ENCODE measurements at regions of chr20 and their contacts with region 1.

Region 1: DNA sequence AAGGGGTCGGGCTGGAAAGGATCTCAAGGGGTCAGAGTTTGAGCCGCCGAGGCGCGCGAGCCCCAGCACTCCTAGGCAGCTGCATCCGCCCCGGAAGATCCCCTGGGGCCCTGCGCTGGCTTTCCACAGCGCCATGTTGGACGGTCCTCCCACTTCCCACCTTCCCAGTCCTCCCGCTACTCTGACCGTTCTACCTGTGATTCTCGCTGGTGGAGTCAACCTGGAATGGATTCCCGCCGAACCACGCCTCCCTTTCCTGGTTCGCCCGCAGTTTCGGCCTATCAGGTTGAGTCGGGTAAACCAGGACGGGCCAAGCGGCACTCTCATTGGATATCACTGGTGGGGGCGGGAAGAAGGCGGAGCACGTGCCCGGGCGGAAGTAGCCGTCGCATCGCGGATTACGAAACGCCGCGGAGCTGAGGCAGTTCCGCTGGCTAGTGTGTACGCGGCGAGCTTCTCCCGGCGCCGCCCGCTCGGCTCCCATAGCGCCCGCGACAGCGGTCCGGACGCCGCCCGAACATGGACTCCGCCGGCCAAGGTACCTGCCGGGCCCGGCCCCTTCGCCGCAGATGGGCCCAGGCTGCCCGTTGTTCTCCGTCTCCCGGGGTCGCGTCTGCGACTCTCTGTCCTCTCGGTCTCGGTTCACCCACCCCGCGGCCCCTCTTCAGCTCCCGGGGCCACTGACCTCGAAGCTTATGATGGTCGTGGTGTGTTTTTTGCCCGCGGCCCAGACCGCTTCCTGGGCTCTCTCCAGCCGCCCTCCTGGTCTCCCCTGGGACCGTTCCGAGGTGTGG is at the start of gene TPD52L2:
- DNase-seq: peak; percentile 96 to 99 (median 97)
- H3K4me3 ChIP-seq: peak within 1 kb of the TSS; percentile 81 to 90
- H3K4me3 Mint-ChIP-seq: peak within 1 kb of the TSS; percentile 90 to 99 (median 96)
- H3K27ac ChIP-seq: peak within 1 kb of the TSS; percentile 81
- H3K27ac Mint-ChIP-seq: peak within 1 kb of the TSS; percentile 87 to 99 (median 96)
- H3K4me1 ChIP-seq: peaks cover 29% of the 10 kb centered on the region
- H3K4me1 Mint-ChIP-seq: peaks cover 15 to 48% (median 29%) of the 10 kb centered on the region in 4 donors
- H3K27me3 ChIP-seq: no peaks in the 10 kb centered on the region
- H3K27me3 Mint-ChIP-seq: no peaks in the 10 kb centered on the region
- total RNA-seq, gene TPD52L2: 44.4 to 44.9 TPM

Region 2: GRCh38 chr20:63475206-63475605 is 389.8 kb before region 1 on chr20:
- CTCF ChIA-PET with region 1: no interaction called
- POLR2A ChIA-PET with region 1: no interaction called
- intact Hi-C with region 1: no loop called
- DNase-seq: no peak
- H3K4me3 ChIP-seq: no peak overlapping the region
- H3K4me3 Mint-ChIP-seq: peak overlapping the region in 1 of 8 donors; percentile 43
- H3K27ac ChIP-seq: no peak overlapping the region
- H3K27ac Mint-ChIP-seq: no peak overlapping the region
- H3K4me1 ChIP-seq: peaks cover 5% of the 10 kb centered on the region
- H3K4me1 Mint-ChIP-seq: peaks cover 0 to 8% (median 3%) of the 10 kb centered on the region in 4 donors
- H3K27me3 ChIP-seq: peaks cover 13% of the 10 kb centered on the region
- H3K27me3 Mint-ChIP-seq: peaks cover 20% of the 10 kb centered on the region in 2 donors

Region 3: DNA sequence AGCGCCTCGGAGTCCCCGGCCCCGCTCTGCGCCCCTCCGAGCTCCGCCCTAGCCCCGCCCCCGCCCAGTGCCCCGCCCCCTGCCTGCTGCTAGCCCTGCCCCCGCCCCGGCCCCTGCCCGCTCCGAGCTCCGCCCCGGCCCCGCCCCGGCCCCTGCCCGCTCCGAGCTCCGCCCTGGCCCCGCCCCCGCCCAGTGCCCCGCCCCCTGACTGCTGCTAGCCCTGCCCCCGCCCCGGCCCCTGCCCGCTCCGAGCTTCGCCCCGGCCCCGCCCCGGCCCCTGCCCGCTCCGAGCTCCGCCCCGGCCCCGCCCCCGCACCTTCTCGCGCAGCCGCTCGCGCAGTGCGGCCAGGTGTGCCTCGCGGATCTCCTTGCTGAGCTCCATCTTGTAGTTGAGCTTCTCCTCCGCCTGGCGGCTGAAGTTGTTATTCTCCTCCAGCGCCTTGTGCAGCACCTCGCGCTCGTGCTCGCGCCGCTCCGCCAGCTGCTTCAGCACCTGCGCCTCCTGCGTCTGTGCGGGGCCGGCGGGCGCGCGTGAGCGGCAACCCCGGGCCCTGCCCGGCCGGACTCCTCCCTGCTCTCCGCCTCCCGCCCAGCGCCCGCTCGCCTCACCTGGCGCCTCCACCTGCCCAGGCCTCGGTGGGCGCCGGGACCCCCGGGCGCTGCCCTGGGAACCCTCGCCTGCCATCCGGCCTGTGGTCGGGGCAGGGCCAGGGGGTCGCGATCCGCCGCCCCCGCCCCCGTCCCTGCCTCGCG is 223.1 kb before region 1 on chr20:
- CTCF ChIA-PET with region 1: interaction called, 4 read pairs
- POLR2A ChIA-PET with region 1: interaction called, 10 read pairs
- intact Hi-C with region 1: no loop called
- DNase-seq: peak; percentile 96 to 98 (median 97)
- H3K4me3 ChIP-seq: peak overlapping the region; percentile 57 to 92
- H3K4me3 Mint-ChIP-seq: peak overlapping the region; percentile 61 to 90 (median 80)
- H3K27ac ChIP-seq: peak overlapping the region; percentile 76
- H3K27ac Mint-ChIP-seq: peak overlapping the region in 4 of 7 donors; percentile 47 to 89 (median 82)
- H3K4me1 ChIP-seq: peaks cover 31% of the 10 kb centered on the region
- H3K4me1 Mint-ChIP-seq: peaks cover 13 to 43% (median 28%) of the 10 kb centered on the region in 4 donors
- H3K27me3 ChIP-seq: no peaks in the 10 kb centered on the region
- H3K27me3 Mint-ChIP-seq: peaks cover 0 to 2% of the 10 kb centered on the region in 2 donors

Region 4: GRCh38 chr20:63739130-63740069 is 125.6 kb before region 1 on chr20 and contains the start of gene SLC2A4RG:
- CTCF ChIA-PET with region 1: no interaction called
- POLR2A ChIA-PET with region 1: interaction called, 37 read pairs
- intact Hi-C with region 1: loop called (anchors 1 kb)
- DNase-seq: peak; percentile 61 to 76 (median 72)
- H3K4me3 ChIP-seq: peak within 1 kb of the TSS; percentile 42 to 92
- H3K4me3 Mint-ChIP-seq: peak within 1 kb of the TSS; percentile 44 to 91 (median 60)
- H3K27ac ChIP-seq: peak within 1 kb of the TSS; percentile 54
- H3K27ac Mint-ChIP-seq: peak within 1 kb of the TSS in 4 of 7 donors; percentile 22 to 65 (median 43)
- H3K4me1 ChIP-seq: peaks cover 33% of the 10 kb centered on the region
- H3K4me1 Mint-ChIP-seq: peaks cover 6 to 17% (median 10%) of the 10 kb centered on the region in 4 donors
- H3K27me3 ChIP-seq: no peaks in the 10 kb centered on the region
- H3K27me3 Mint-ChIP-seq: no peaks in the 10 kb centered on the region
- total RNA-seq, gene SLC2A4RG: 121 to 124 TPM

Region 5: DNA sequence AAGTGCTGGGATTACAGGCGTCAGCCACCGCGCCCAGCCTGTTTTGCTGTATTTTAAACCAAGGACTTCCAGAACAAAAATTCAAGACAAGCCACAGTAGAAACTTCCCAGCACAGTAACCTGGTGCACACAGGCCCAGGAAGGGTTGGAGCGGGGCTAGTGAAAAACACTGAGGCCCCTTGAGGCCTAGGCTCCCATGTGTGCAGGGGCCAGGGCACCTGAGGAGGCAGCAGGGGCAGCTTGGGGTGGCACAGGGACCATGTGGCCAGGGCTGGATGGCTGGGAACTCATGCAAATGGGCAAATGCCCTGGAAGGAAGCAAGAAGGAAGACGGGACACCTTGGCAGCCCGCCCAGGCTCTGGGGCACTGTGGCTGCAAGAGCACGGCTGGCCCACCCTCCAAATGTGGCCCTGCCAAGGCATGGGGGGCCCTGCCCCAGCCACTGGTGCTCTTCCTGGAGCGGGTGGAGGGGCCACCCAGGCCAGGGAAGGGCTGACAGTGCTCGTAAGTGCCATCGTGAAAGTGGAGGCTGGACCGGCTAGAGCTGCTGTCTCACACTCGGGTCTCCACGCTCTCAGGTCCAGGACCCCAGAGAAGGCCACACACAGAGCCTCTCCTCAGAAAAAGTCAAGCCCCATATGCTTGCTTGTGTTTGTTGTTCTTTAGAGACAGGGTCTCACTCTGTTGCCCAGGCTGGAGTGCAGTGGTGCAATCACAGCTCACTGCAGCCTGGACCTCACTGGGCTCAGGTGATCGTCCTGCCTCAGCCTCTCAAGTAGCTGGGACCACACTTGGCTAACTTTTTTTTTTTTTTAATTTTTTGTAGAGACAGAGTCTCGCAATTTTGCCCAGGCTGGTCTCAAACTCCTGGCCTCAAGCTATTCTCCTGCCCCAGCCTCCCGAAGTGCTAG is 115.2 kb before region 1 on chr20:
- CTCF ChIA-PET with region 1: no interaction called
- POLR2A ChIA-PET with region 1: no interaction called
- intact Hi-C with region 1: no loop called
- DNase-seq: no peak
- H3K4me3 ChIP-seq: no peak overlapping the region
- H3K4me3 Mint-ChIP-seq: peak overlapping the region in 1 of 8 donors; percentile 35
- H3K27ac ChIP-seq: no peak overlapping the region
- H3K27ac Mint-ChIP-seq: peak overlapping the region in 4 of 7 donors; percentile 7 to 53 (median 44)
- H3K4me1 ChIP-seq: peaks cover 25% of the 10 kb centered on the region
- H3K4me1 Mint-ChIP-seq: peaks cover 8 to 35% (median 18%) of the 10 kb centered on the region in 4 donors
- H3K27me3 ChIP-seq: no peaks in the 10 kb centered on the region
- H3K27me3 Mint-ChIP-seq: no peaks in the 10 kb centered on the region

Region 6: DNA sequence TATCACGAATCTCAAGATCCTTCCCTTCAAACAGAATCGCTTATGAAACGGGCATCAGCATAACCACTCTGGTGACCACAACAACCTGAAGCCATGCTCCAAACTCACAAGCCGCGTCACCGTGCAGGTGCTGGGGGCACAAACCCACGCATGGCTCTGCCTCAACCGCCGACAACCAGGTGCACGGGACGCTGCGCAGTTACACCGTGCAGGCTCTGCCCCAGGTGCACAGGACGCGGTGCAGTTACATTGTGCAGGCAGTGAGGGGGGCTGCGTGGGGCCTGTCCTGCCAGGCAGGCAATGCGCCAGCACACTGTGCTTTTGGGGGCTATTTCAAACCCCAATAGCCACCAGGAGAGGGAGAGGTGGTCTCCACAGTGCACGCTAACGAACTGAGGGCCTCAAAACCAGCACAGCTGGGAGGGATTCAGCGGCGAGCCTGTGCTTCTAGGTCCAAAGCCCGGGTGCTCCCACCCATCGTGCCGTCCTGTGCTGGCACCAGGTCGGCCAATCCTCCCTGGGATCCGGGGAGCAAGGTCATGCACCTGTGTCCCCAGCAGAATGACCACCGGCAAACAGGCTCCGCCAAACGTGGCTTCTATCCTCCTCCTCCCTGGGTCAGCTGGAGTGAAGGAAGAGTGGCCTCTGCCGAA is 69.7 kb before region 1 on chr20:
- CTCF ChIA-PET with region 1: no interaction called
- POLR2A ChIA-PET with region 1: no interaction called
- intact Hi-C with region 1: no loop called
- DNase-seq: no peak
- H3K4me3 ChIP-seq: no peak overlapping the region
- H3K4me3 Mint-ChIP-seq: no peak overlapping the region
- H3K27ac ChIP-seq: no peak overlapping the region
- H3K27ac Mint-ChIP-seq: peak overlapping the region in 1 of 7 donors; percentile 79
- H3K4me1 ChIP-seq: no peaks in the 10 kb centered on the region
- H3K4me1 Mint-ChIP-seq: peaks cover 0 to 1% (median 0%) of the 10 kb centered on the region in 4 donors
- H3K27me3 ChIP-seq: no peaks in the 10 kb centered on the region
- H3K27me3 Mint-ChIP-seq: peaks cover 7 to 9% of the 10 kb centered on the region in 2 donors

Region 7: DNA sequence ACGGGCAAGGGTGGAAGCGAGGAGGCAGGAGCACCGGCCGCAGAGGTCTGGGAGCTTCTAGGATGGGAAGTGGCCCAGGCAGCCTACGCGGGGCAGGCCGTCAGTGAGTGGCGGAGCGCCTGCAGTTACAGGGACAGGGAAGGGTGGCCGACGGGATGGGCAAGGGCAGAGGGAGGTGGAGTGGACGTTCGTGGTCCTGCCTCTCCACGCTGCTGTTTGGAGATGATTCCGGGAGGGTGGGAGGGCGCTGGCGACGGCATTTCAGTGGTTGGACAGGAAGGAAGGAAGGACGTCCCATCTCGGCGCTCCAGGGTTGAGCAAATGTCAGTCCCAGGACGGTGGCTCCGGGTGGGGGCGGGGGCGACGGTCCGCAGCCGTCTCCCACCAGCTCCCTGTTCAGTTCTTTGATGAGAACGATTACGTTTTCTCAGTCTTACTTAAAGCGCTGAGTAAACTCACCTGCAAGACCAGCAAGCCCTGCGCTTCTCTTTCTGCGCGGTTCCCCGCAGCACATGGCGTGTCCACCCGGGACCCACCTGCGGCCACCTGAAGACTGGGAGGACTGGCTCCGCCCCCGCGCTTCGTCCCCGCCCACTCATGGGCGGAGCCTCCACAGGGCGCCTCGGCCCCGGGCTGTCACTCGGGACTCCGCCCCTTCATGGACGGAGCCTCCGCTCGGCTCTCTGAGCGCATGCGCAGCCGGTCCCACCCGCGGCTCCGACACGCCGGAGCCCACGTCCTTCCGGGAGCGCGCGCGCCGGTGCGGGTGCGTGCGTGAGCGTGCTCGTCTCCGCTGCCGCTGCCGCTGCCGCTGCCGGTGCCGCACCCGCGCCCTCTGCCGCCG is 29.5 kb after region 1 on chr20 and contains the start of gene DNAJC5:
- CTCF ChIA-PET with region 1: no interaction called
- POLR2A ChIA-PET with region 1: interaction called, 22 read pairs
- intact Hi-C with region 1: loop called (anchors 1 kb)
- DNase-seq: peak; percentile 95 to 98 (median 98)
- H3K4me3 ChIP-seq: peak within 1 kb of the TSS; percentile 68 to 81
- H3K4me3 Mint-ChIP-seq: peak within 1 kb of the TSS; percentile 92 to 99 (median 94)
- H3K27ac ChIP-seq: peak within 1 kb of the TSS; percentile 66
- H3K27ac Mint-ChIP-seq: peak within 1 kb of the TSS; percentile 93 to 99 (median 97)
- H3K4me1 ChIP-seq: peaks cover 45% of the 10 kb centered on the region
- H3K4me1 Mint-ChIP-seq: peaks cover 28 to 48% (median 40%) of the 10 kb centered on the region in 4 donors
- H3K27me3 ChIP-seq: no peaks in the 10 kb centered on the region
- H3K27me3 Mint-ChIP-seq: no peaks in the 10 kb centered on the region
- total RNA-seq, gene DNAJC5: 53.3 to 54.4 TPM

Region 8: GRCh38 chr20:63980806-63981728 is 116.0 kb after region 1 on chr20 and contains the start of gene PRPF6:
- CTCF ChIA-PET with region 1: interaction called, 12 read pairs
- POLR2A ChIA-PET with region 1: interaction called, 14 read pairs
- intact Hi-C with region 1: no loop called
- DNase-seq: peak; percentile 91 to 94 (median 94)
- H3K4me3 ChIP-seq: peak within 1 kb of the TSS; percentile 42 to 67
- H3K4me3 Mint-ChIP-seq: peak within 1 kb of the TSS; percentile 90 to 99 (median 93)
- H3K27ac ChIP-seq: peak within 1 kb of the TSS; percentile 69
- H3K27ac Mint-ChIP-seq: peak within 1 kb of the TSS; percentile 95 to 99 (median 98)
- H3K4me1 ChIP-seq: peaks cover 54% of the 10 kb centered on the region
- H3K4me1 Mint-ChIP-seq: peaks cover 48 to 72% (median 60%) of the 10 kb centered on the region in 4 donors
- H3K27me3 ChIP-seq: no peaks in the 10 kb centered on the region
- H3K27me3 Mint-ChIP-seq: no peaks in the 10 kb centered on the region
- total RNA-seq, gene PRPF6: 86.4 to 88.7 TPM